ENCODE measurements at regions of chr1 and their contacts with region 1.

Region 1: GRCh38 chr1:227563324-227564201 is at the start of gene ZNF678:
- DNase-seq: peak; percentile 86
- H3K4me3 Mint-ChIP-seq: peak within 1 kb of the TSS; percentile 90
- H3K27ac Mint-ChIP-seq: peak within 1 kb of the TSS; percentile 90
- H3K4me1 Mint-ChIP-seq: peaks cover 25% of the 10 kb centered on the region
- H3K27me3 Mint-ChIP-seq: peaks cover 16% of the 10 kb centered on the region
- total RNA-seq, gene ZNF678: 4.2 to 4.5 TPM

Region 2: GRCh38 chr1:227542143-227543120 is 21.1 kb before region 1 on chr1:
- CTCF ChIA-PET with region 1: interaction called, 16 read pairs
- POLR2A ChIA-PET with region 1: interaction called, 3 read pairs
- DNase-seq: peak; percentile 89
- H3K4me3 Mint-ChIP-seq: peak overlapping the region; percentile 47
- H3K27ac Mint-ChIP-seq: peak overlapping the region; percentile 85
- H3K4me1 Mint-ChIP-seq: peaks cover 8% of the 10 kb centered on the region
- H3K27me3 Mint-ChIP-seq: no peaks in the 10 kb centered on the region

Measured in activated CD4-positive, alpha-beta T cell treated with anti-CD3 and anti-CD28 coated beads, Interleukin-2, amount 10 ng/mL, durations not matched to agents 7 days and 5 days (primary cell).